Calu3 (cell line): ENCODE measurements at regions of chr3 and their contacts with region 1.

Region 1: DNA sequence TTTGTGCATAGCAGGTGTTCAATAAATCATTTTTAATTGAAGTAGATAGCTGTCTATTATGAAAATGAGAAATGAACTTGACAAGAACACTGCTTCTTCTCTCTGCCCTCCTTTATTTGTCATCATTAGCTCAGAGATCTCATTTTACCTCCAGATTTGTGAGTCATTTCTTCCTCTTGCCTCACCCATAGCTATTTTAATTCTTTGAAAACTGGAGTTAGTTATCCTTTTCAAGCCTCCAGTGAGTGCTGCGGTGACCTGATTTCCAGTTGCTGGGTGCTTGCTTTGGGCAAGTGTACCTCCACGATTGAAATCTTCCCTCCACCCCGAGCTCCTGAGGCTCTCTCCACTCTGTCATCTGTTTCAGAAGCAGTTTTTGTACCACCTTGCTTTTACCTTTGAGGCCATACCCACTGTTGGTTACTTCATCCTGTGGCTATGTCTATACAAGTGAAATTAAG is 114.6 kb downstream of the NFKBIZ start:
- DNase-seq: no peak
- H3K4me3 Mint-ChIP-seq: no peak overlapping the region
- H3K27ac Mint-ChIP-seq: peak overlapping the region; percentile 18
- H3K4me1 Mint-ChIP-seq: peaks cover 24% of the 10 kb centered on the region
- H3K27me3 Mint-ChIP-seq: no peaks in the 10 kb centered on the region
- CTCF ChIP-seq: no peak

Region 2: GRCh38 chr3:101989578-101990200 is 25.8 kb after region 1 on chr3:
- CTCF ChIA-PET with region 1: interaction called, 10 read pairs
- intact Hi-C with region 1: no loop called
- DNase-seq: no peak
- H3K4me3 Mint-ChIP-seq: no peak overlapping the region
- H3K27ac Mint-ChIP-seq: no peak overlapping the region
- H3K4me1 Mint-ChIP-seq: peaks cover 3% of the 10 kb centered on the region
- H3K27me3 Mint-ChIP-seq: no peaks in the 10 kb centered on the region
- CTCF ChIP-seq: no peak

Region 3: GRCh38 chr3:102057781-102058421 is 94.0 kb after region 1 on chr3:
- CTCF ChIA-PET with region 1: no interaction called
- intact Hi-C with region 1: no loop called
- DNase-seq: no peak
- H3K4me3 Mint-ChIP-seq: no peak overlapping the region
- H3K27ac Mint-ChIP-seq: no peak overlapping the region
- H3K4me1 Mint-ChIP-seq: peaks cover 13% of the 10 kb centered on the region
- H3K27me3 Mint-ChIP-seq: no peaks in the 10 kb centered on the region
- CTCF ChIP-seq: no peak